ENCODE measurements at regions of chr5 and their contacts with region 1.

Region 1: DNA sequence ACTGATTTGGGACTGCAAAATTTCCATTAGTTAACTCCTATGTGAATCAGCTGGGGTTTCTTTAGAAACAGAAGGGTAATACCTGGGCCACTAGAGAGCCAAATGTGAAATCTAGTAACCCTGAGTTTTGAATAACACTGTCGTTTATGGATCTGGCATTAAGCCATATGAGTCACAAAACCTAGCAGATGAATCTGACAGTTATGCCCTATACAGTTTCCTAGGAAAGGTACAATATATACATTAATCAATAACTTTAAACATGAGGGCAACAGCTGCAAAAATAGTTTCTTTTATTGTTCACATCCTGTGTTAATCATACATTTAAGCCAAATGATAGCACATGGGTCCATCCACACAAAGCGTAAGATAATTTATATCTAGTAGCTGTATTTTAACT is 56.9 kb downstream of the PAM start:
- DNase-seq: no peak
- ATAC-seq: peak; percentile 51 to 79 (median 67)
- H3K4me3 ChIP-seq: no peak overlapping the region
- H3K27ac ChIP-seq: peak overlapping the region; percentile 30
- H3K4me1 ChIP-seq: peaks cover 57% of the 10 kb centered on the region
- H3K27me3 ChIP-seq: no peaks in the 10 kb centered on the region
- CTCF ChIP-seq: no peak

Region 2: DNA sequence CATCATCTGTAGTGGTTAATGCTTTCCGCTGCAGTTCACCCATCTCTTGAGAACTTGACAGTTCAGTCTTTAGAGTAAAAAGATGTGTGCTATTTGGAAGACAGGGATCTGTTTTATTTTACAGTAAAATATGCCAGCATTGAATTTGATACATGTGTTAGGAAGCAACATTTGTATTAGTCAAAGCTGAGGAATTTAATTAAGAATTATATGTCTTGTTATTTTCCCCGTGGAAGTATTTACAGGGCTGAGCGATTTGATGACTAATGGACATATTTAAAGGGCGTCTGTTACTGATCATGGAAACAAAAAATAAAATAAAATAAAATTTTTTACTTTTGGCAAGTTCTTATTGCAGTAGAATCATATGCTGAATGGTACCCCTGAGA is 44.4 kb after region 1 on chr5:
- intact Hi-C with region 1: loop called in 1 of 2 experiments (anchors 5 kb)
- DNase-seq: no peak
- ATAC-seq: no peak
- H3K4me3 ChIP-seq: no peak overlapping the region
- H3K27ac ChIP-seq: no peak overlapping the region
- H3K4me1 ChIP-seq: no peaks in the 10 kb centered on the region
- H3K27me3 ChIP-seq: no peaks in the 10 kb centered on the region
- CTCF ChIP-seq: no peak

Measured in psoas muscle (tissue), 8 donors.